Natural killer cell (primary cell): ENCODE measurements at regions of chr3 and their contacts with region 1.

Region 1: GRCh38 chr3:10164546-10165393 is at the start of gene IRAK2:
- DNase-seq: peak; percentile 64 to 79
- ATAC-seq: peak; percentile 91 to 92 (median 91)
- H3K4me3 ChIP-seq: peak within 1 kb of the TSS; percentile 82
- H3K4me3 Mint-ChIP-seq: peak within 1 kb of the TSS; percentile 90
- H3K27ac ChIP-seq: peak within 1 kb of the TSS; percentile 52
- H3K27ac Mint-ChIP-seq: peak within 1 kb of the TSS; percentile 72 to 78
- H3K4me1 ChIP-seq: peaks cover 28% of the 10 kb centered on the region
- H3K4me1 Mint-ChIP-seq: peaks cover 23 to 32% of the 10 kb centered on the region in 2 donors
- H3K27me3 ChIP-seq: no peaks in the 10 kb centered on the region
- H3K27me3 Mint-ChIP-seq: no peaks in the 10 kb centered on the region
- CTCF ChIP-seq: peak; percentile 99
- total RNA-seq, gene IRAK2: 10.4 to 28.2 (median 10.9) TPM

Region 2: DNA sequence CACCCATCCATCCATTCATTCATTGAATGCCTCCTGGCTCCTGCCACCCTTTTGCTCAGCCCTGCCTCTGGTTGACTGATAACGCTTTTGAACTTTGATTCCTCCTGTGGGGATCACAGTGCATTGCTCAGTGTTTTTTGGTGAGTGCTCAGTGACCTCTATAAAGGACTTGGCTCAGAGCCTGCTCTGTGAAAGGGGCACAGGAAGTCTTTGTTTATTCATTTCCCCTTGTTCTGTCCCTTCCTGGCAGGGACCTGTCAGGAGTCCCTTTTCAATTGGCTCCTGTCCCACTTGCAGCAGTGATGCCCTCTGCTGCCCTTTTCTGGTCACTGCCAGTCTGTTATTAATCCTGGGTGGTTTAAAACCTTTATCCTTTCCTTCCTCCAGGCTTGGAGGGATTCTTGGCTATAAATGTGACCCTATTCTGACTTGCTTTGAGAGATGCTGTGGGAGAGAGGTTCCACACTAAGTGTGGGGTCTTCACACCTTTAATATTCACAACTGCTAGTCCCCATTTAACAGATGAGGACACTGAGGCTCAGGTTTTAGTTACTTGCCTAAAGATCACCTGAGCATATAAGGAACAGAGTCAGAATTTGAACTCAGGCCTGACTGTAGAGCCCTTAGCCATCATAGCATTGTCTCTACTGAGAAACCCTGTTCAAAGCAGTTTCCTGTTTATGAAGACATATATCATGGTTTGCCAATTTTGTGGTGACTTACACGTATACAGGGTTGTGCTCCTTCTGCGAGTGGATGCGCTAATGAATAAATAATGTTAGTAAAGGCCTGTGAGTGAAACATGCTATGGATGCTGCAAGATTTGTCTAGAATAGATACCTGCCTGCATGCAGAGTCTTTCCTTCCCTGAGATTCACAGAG is 60.3 kb after region 1 on chr3:
- intact Hi-C with region 1: loop called (anchors 1 kb)
- DNase-seq: peak; percentile 50 to 83
- ATAC-seq: peak; percentile 74 to 78 (median 77)
- H3K4me3 ChIP-seq: no peak overlapping the region
- H3K4me3 Mint-ChIP-seq: peak overlapping the region; percentile 74
- H3K27ac ChIP-seq: no peak overlapping the region
- H3K27ac Mint-ChIP-seq: peak overlapping the region; percentile 74 to 92
- H3K4me1 ChIP-seq: peaks cover 61% of the 10 kb centered on the region
- H3K4me1 Mint-ChIP-seq: peaks cover 46 to 53% of the 10 kb centered on the region in 2 donors
- H3K27me3 ChIP-seq: no peaks in the 10 kb centered on the region
- H3K27me3 Mint-ChIP-seq: no peaks in the 10 kb centered on the region
- CTCF ChIP-seq: peak; percentile 76